ENCODE measurements at regions of chr11 and their contacts with region 1.

Region 1: GRCh38 chr11:17036666-17037542 is 22.7 kb upstream of the PLEKHA7 start:
- DNase-seq: no peak
- ATAC-seq: no peak
- H3K4me3 ChIP-seq: no peak overlapping the region
- H3K27ac ChIP-seq: no peak overlapping the region
- H3K4me1 ChIP-seq: no peaks in the 10 kb centered on the region
- H3K27me3 ChIP-seq: peaks cover 7% of the 10 kb centered on the region
- CTCF ChIP-seq: 0 out of 2 replicates have a peak, but pooled peaks have one; percentile 12

Region 2: DNA sequence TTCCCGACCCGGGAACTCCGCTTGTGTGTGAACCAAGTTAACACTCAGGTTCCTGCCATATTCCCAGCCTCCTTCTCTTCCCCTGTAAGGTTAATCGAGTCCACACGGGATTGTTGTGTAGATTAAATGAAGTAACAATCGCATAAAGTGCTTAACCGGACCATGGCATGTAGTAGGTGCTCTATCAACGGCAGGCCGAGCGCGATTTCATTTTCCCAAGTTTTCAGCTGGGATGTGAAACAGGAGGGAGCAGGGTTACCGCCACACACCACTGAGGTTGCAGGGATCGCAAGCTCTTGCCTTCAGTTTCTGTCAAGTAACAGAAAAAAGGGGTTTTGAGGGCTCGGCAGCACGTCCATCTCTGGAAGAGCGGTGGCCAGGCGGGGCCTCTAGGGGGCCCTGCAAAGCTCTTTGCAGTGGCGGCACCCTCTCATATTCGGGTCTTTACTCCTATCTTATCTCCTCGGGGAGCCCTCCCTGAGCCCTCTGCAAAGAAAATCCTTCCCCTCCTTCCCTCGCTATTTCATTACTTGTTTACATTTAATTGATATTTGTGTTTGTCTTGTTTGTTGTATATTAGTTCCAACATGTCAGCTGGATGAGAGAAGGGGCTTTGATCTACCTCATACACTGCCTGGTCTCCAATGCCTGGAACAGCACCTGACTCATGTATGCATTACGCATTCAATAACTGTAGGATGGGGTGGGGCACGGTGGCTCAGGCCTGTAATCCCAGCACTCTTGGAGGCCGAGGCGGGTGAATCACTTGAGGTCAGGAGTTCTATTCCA is 21.9 kb before region 1 on chr11:
- CTCF ChIA-PET with region 1: no interaction called
- POLR2A ChIA-PET with region 1: no interaction called
- in situ Hi-C with region 1: no loop called
- intact Hi-C with region 1: loop called (anchors 2 kb)
- DNase-seq: no peak
- ATAC-seq: peak; percentile 47
- H3K4me3 ChIP-seq: peak overlapping the region; percentile 52 to 89
- H3K27ac ChIP-seq: peak overlapping the region; percentile 71
- H3K4me1 ChIP-seq: peaks cover 10% of the 10 kb centered on the region; the same call in 1 of the 2 replicates
- H3K27me3 ChIP-seq: no peaks in the 10 kb centered on the region
- CTCF ChIP-seq: peak; percentile 88